Calu3 (cell line): ENCODE measurements at regions of chr4 and their contacts with region 1.

Region 1: DNA sequence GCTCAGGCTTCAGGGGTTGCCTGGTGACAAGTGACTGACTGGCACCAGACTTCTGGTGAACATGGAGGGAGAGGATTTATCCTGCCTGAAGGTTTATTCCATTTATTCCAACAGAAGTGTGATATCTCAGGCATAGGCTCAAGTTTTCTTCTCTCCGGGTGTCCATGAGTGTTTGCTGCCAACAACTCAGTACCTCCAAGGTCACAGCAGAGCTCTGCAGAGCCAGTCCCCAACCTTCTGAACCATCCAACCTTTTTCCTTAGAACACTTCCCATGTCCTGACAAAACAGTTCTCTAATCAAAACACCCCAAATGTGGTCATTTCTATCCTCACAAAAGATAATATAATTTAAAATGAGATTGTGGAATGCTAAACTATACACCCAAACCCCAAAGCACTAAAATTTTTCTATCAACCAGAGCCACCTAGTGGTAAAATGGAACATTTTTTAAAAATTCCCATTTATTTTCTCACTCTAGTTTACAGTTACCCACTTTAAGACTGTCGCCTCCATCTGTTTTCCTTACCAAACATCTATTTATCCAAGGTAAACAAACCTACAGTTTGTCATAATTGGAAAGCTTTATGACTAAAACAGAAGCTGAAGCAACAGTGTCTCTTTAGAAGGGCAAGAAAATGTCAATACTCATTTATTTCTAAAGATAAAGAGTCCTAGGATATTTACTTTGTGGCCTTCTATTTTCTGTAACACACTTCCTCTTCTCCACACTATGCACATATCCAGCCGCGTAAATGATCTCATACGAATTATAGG is 39.6 kb downstream of the TMEM154 start:
- DNase-seq: no peak
- H3K4me3 Mint-ChIP-seq: no peak overlapping the region
- H3K27ac Mint-ChIP-seq: no peak overlapping the region
- H3K4me1 Mint-ChIP-seq: no peaks in the 10 kb centered on the region
- H3K27me3 Mint-ChIP-seq: no peaks in the 10 kb centered on the region
- CTCF ChIP-seq: peak; percentile 14

Region 2: DNA sequence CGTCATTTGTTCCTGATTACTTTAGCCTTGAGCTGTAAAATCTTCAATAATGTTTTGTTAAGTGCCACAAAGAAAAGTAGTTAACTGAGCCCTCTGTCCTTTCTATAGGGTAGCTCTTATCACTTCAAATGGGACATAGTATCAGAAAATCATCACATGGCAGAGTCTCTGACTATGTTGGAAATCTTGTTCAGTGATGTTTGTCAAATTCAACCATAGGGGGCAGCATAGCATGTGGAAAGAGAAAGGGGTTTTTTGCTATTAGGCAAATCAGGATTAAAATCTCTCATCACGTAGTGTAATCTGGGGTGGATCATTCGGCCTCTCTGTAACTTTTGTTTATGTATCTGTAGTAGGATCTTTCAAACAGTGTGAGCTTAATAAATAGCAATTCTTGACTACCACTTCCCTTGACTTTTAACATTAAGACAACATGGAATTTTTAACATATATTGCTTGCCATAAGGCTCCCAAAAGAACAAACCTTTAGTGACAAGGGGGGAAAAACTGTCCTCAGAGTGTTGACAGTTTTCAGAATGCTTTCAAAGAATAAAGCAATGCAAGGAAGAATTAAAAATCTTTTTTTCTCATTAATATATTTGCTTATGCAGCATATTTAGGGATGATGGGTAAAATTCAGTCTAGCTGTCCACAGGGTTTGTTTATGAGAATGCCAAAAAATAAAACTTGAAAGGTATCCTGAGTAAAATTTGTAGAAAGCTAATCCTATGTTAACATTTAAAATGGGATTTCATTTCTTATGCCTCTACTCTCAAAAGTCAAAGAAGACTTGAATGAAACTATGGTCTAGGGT is 231.5 kb before region 1 on chr4:
- CTCF ChIA-PET with region 1: no interaction called
- intact Hi-C with region 1: loop called (anchors 2 kb)
- DNase-seq: no peak
- H3K4me3 Mint-ChIP-seq: no peak overlapping the region
- H3K27ac Mint-ChIP-seq: no peak overlapping the region
- H3K4me1 Mint-ChIP-seq: no peaks in the 10 kb centered on the region
- H3K27me3 Mint-ChIP-seq: no peaks in the 10 kb centered on the region
- CTCF ChIP-seq: peak; percentile 31

Region 3: DNA sequence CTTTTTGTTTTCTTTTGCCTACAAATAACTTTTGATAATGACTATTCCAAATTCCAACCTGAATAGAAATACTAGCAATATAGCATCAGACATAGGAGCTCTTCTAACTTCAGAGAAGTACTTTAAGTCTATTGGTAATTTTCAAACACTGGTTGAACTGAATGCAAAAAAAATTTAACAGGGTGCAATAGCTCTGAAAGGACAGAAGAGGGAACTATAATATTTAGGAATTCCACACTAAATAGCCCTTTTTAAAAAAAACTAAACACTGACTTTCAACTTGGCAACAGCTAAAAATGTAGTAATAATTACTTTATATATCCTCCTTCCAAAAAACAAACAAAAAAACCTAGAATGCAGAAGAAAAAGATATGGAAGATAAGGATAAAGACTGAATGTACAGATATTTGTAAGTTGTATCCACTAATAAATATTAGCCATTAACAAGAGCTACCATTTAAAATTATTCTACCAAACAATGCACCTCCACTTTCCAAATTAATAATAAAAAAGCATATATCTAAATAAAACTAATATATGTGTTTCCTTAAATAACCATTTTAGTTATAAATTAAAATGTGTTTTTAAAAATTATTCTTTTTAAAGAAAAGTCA is 185.7 kb before region 1 on chr4:
- CTCF ChIA-PET with region 1: no interaction called
- intact Hi-C with region 1: loop called (anchors 1 kb)
- DNase-seq: no peak
- H3K4me3 Mint-ChIP-seq: no peak overlapping the region
- H3K27ac Mint-ChIP-seq: no peak overlapping the region
- H3K4me1 Mint-ChIP-seq: peaks cover 42% of the 10 kb centered on the region
- H3K27me3 Mint-ChIP-seq: no peaks in the 10 kb centered on the region
- CTCF ChIP-seq: no peak

Region 4: DNA sequence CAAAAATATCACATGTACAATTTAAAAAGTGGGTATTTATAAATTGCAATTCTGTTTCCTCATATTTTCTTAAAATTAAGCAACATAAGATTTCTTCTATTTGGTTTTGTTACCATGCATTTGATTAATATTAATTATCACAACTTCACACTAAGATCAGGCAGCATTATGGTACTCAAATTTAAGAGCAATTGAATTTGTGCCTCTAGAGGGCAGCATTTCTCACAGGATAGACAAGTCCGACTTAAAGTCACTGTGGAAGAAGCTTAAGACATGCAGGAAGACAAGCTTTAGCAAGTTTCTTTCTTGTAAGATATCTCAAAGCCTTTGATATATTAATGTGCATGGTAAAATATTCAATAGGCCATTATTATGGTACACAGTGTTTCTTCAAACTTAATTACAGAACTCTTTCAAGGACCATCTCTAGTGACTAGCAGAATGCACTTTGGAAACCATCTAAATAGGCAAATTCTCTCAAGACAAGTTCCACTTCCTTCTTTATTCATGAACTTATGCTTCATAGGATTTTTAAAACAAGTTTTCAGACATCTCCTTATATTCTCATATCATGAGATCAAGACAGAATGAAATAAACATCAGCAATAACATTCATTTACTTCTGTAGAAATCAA is 139.3 kb before region 1 on chr4:
- CTCF ChIA-PET with region 1: interaction called, 5 read pairs
- intact Hi-C with region 1: loop called (anchors 1 kb)
- DNase-seq: peak; percentile 58
- H3K4me3 Mint-ChIP-seq: no peak overlapping the region
- H3K27ac Mint-ChIP-seq: no peak overlapping the region
- H3K4me1 Mint-ChIP-seq: peaks cover 17% of the 10 kb centered on the region
- H3K27me3 Mint-ChIP-seq: no peaks in the 10 kb centered on the region
- CTCF ChIP-seq: peak; percentile 43

Region 5: DNA sequence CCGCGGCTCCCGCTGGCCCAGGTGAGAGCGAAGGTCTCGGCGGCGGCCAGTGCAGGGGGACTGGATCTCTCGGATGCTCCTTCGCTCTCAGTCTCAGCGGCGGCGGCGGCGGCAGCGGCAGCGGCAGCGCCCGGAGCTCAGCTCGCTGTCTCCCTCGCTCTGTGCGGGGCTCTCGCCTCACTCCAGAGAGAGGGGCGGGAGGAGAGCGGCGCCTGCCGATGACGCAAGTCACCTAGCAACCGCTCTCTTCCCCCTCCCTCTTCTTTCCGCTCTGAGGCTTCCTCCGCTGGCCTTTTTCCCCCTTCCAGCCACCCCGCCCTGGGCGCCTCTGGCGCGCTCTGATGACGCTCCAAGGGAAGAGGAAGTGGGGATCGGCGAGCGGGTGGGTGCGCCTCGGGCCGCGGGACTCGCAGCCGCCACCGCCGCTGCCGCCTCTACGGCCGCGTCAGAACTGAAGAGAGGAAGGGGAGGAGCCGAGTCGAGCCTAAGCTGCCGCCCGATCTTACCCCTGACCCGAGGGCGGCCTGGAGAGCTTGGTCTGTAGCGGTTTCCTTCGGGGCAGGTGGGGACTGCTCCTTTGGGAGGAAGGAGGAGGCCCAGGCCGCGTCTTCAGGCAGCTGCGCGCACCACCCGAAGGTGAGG is 104.2 kb before region 1 on chr4 and contains the start of gene FBXW7:
- CTCF ChIA-PET with region 1: no interaction called
- intact Hi-C with region 1: loop called (anchors 10 kb)
- DNase-seq: peak; percentile 96
- H3K4me3 Mint-ChIP-seq: peak within 1 kb of the TSS; percentile 96
- H3K27ac Mint-ChIP-seq: peak within 1 kb of the TSS; percentile 92
- H3K4me1 Mint-ChIP-seq: peaks cover 30% of the 10 kb centered on the region
- H3K27me3 Mint-ChIP-seq: no peaks in the 10 kb centered on the region
- CTCF ChIP-seq: no peak
- total RNA-seq, gene FBXW7: 38.7 and 45.1 TPM in 2 replicates